ENCODE measurements at regions of chr3 and their contacts with region 1.

Region 1: GRCh38 chr3:88180398-88180999 is 30.7 kb downstream of the C3orf38 start:
- DNase-seq: no peak
- H3K4me3 Mint-ChIP-seq: no peak overlapping the region
- H3K27ac Mint-ChIP-seq: no peak overlapping the region
- H3K4me1 Mint-ChIP-seq: peaks cover 2% of the 10 kb centered on the region
- H3K27me3 Mint-ChIP-seq: no peaks in the 10 kb centered on the region

Region 2: DNA sequence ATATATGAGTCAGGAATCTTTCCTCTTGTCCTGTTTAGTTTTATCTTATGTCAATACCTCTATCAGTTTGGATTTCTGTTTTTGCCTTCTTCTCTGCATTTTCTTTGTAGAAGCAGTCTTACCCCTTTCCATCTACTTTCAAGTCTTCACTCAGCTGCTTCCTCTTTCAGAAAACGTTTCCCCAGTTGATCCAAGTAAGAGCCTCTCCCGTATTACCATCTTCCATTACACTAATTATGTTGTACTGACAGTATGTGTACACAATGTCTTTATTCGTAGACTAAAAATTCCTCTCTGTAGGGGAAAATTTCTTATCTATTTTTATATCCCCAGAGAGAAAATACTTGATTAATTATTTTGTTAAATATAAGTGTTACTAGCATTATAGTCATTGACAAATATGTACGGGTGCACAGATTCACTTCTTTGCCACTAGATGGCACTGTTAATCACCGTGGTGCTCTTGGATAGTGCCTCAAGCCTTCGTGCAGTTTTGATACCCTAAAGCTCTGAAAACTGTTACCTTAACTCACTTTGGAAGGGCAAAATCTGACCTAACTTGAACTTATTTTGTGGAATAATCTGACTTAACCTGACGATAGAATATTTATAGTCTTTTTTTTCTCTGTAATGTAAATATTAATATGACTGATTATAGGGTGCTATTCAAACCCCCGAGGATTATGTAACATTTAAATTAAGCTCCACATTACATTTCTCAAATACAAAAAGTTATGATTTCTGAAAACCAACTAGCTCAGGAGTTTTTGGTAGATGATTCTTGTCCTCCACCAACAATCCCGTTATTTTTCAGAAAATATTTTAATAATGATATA is 829.9 kb before region 1 on chr3:
- CTCF ChIA-PET with region 1: interaction called, 4 read pairs
- POLR2A ChIA-PET with region 1: no interaction called
- intact Hi-C with region 1: loop called (anchors 1 kb)
- DNase-seq: peak; percentile 16
- H3K4me3 Mint-ChIP-seq: no peak overlapping the region
- H3K27ac Mint-ChIP-seq: no peak overlapping the region
- H3K4me1 Mint-ChIP-seq: no peaks in the 10 kb centered on the region
- H3K27me3 Mint-ChIP-seq: no peaks in the 10 kb centered on the region

Region 3: DNA sequence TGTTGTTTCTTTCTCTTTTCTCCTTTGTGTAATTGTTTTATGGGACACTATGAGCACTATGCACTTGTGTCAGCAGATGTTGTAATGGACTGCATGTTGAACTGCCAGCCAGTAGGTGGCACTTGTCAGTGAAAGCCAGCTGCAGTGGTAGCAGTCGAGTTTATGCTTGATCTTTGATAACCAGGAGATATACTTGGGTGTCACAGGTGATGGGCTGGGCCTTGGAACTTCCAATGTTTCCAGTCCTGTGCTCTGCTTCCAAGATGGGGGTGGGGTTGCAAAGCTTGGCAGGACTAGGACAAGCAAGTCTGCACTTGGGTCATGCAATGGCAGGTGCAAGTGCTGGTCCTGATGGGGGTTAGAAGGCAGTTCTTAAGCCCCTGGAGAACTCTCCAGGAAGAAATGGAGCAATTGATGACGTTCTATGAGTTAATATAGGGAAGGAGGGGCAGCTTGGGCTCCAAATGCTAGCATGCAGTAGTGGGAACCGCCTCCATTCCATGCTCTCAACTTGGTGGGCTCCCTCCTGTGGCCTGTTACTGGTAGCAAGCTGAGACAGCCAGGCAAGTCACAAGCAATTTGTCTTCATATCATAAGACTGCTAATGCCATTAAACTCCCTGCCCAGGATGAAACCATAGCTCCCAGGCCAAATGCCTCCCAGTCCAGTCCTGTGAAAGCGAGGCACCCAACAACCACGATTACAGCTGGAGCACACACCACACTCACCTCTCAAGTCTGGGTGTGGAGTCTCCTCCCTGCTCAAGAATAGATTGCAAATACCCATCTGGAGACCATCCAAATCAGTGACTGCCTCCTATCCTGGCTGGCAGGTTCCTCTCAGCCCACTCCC is 408.9 kb before region 1 on chr3:
- CTCF ChIA-PET with region 1: interaction called, 6 read pairs
- POLR2A ChIA-PET with region 1: no interaction called
- intact Hi-C with region 1: loop called (anchors 2 kb)
- DNase-seq: peak; percentile 33
- H3K4me3 Mint-ChIP-seq: no peak overlapping the region
- H3K27ac Mint-ChIP-seq: no peak overlapping the region
- H3K4me1 Mint-ChIP-seq: no peaks in the 10 kb centered on the region
- H3K27me3 Mint-ChIP-seq: peaks cover 4% of the 10 kb centered on the region